ENCODE measurements at regions of chr7 and their contacts with region 1.

Region 1: GRCh38 chr7:116809636-116810266 is 52.6 kb upstream of the CAPZA2 start:
- DNase-seq: peak; percentile 60

Region 2: DNA sequence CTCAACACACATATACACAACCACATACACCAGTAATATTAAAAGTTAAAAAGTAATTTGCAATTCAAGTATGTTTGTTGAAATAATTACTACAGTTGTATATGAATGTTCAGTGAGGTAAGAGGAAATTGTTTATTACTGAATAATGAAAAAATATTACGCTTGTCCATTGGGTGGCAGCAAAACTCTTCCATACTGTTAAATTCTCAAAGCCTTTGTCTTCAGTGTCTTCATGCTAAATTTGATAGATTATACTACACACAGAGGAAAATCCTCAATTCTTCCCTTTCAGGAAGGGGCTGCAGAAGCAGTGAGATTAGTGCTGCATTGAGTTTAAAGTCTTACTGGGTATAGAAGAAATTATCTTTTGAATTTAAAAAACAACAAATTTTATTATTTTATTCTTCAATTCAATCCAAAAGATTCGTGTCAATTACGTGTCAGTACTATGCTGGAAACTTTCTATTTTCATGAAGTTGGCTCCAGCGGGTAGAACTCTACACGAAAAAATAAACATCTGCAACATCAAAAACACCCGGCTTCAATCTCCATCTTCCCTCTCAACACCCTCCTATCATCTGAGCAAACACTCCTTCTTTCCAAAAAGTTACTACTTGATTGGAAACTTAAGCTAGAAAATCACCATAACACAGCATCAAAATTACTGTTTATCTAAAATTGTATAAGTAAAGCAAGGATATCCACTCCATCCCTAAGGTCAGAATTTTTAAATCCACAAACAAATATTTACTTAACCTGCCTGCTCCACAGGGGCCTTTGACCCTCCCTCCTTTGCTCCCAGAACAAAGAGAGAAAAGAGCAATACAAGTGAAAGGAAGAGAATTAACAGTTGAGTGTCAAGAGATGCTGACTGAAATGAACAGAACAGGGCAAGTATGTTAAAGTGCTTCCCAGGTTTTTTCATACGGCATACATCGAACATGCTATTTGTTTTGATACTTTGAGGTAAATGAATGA is 636.4 kb before region 1 on chr7:
- in situ Hi-C with region 1: loop called (anchors 25 kb)
- DNase-seq: peak; percentile 67

Region 3: GRCh38 chr7:116552602-116553001 is 257.1 kb before region 1 on chr7:
- in situ Hi-C with region 1: no loop called
- DNase-seq: no peak

Region 4: GRCh38 chr7:116591202-116592040 is 218.3 kb before region 1 on chr7:
- in situ Hi-C with region 1: loop called (anchors 10 kb)
- DNase-seq: peak; percentile 39

Region 5: DNA sequence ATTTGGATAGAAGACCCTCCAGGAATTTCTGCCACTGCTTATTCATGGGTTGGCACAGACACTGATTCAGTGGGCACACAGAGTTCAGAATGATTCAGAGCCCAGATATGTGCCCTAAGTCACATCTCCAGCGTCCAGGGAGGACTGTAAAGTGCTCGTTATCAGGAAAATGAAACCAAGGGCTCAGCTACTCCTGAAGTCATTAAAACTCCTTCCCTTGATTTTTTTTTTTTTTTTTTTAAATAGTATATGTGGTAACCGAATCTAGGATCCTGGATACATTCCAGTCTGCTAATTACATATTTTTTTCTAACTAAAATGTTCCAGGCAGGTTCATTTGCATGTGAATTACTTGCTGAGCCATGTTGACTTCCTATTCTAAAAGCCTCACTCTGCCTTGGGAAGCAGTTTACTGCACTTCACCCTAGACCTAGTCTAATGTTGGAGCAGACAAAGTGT is 103.1 kb before region 1 on chr7:
- in situ Hi-C with region 1: no loop called
- DNase-seq: no peak

Region 6: DNA sequence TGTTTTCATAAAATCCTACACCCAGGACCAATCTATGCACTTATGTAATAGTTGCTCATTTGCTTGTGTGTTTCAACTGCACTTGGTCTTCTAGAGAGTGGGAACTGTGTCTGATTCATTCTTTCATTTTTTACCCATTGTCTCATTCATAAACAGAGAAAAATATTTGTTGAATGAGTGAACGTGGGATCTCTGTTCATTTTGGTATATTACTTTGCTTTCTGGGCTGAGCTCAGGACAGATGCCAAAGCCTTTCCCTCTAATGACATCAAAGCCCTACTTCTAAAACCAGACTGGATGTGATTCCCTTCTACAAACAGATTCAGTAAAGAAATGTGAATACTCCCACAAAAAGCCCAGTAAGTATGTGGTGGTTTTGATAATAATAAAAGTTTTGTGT is 288.7 kb after region 1 on chr7:
- in situ Hi-C with region 1: no loop called
- DNase-seq: no peak